ENCODE measurements at regions of chr9 and their contacts with region 1.

Region 1: GRCh38 chr9:124126571-124127289 is 115.2 kb downstream of the LHX2 start:
- DNase-seq: peak; percentile 84
- H3K4me3 ChIP-seq: peak overlapping the region in 1 of 2 experiments; percentile 2; a peak in 1 of 4 replicates
- H3K27ac ChIP-seq: no peak overlapping the region
- H3K4me1 ChIP-seq: no peaks in the 10 kb centered on the region
- H3K27me3 ChIP-seq: no peaks in the 10 kb centered on the region; the same call in 1 of the 2 replicates
- CTCF ChIP-seq: peak; percentile 95
- EP300 ChIP-seq: no peak
- RAD21 ChIP-seq: peak; percentile 83

Region 2: GRCh38 chr9:124110307-124110915 is 16.3 kb before region 1 on chr9:
- CTCF ChIA-PET with region 1: interaction called, 19 read pairs
- POLR2A ChIA-PET with region 1: no interaction called
- DNase-seq: no peak
- H3K4me3 ChIP-seq: no peak overlapping the region
- H3K27ac ChIP-seq: no peak overlapping the region
- H3K4me1 ChIP-seq: no peaks in the 10 kb centered on the region
- H3K27me3 ChIP-seq: no peaks in the 10 kb centered on the region; the same call in 1 of the 2 replicates
- CTCF ChIP-seq: no peak
- EP300 ChIP-seq: no peak
- RAD21 ChIP-seq: no peak

Region 3: GRCh38 chr9:124149992-124150391 is 23.3 kb after region 1 on chr9:
- CTCF ChIA-PET with region 1: interaction called, 10 read pairs
- POLR2A ChIA-PET with region 1: no interaction called
- DNase-seq: no peak
- H3K4me3 ChIP-seq: no peak overlapping the region
- H3K27ac ChIP-seq: no peak overlapping the region
- H3K4me1 ChIP-seq: no peaks in the 10 kb centered on the region
- H3K27me3 ChIP-seq: no peaks in the 10 kb centered on the region; the same call in 1 of the 2 replicates
- CTCF ChIP-seq: no peak
- EP300 ChIP-seq: no peak
- RAD21 ChIP-seq: no peak

Region 4: GRCh38 chr9:124320062-124320973 is 193.6 kb after region 1 on chr9:
- CTCF ChIA-PET with region 1: interaction called, 55 read pairs
- POLR2A ChIA-PET with region 1: no interaction called
- DNase-seq: peak; percentile 92
- H3K4me3 ChIP-seq: no peak overlapping the region; a peak in 2 of 4 replicates
- H3K27ac ChIP-seq: no peak overlapping the region
- H3K4me1 ChIP-seq: no peaks in the 10 kb centered on the region; a peak in 1 of 4 replicates
- H3K27me3 ChIP-seq: no peaks in the 10 kb centered on the region
- CTCF ChIP-seq: peak; percentile 83
- EP300 ChIP-seq: no peak
- RAD21 ChIP-seq: peak; percentile 78

Region 5: DNA sequence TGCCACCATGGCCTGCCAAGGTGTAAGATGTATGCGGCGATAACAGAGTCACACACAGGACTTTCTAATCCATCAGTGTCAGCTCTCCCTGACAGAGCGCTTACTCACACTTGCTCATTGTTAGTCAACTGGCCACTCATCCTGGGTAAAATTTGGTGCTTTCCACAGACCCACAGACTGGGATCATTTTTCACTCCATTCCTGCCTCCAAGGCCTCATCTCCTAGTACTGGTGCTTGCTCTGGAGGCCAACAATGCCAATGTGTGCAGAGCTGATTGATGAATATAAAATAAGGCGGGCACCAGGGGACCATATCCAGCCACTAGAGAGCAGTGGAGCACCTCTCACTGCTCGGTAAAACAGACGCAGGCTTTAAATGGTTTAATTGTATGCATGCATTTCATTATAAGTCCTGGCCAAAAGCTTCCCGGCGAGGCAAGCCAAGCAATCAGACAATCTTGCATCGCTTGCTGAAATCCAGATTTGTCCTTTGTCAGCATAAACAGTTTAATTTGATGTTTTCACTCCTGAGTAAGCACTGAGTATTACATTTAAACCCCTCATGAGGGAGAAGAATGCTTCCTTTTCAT is 266.2 kb after region 1 on chr9:
- CTCF ChIA-PET with region 1: interaction called, 64 read pairs
- POLR2A ChIA-PET with region 1: no interaction called
- DNase-seq: peak; percentile 77
- H3K4me3 ChIP-seq: peak overlapping the region in 1 of 2 experiments; percentile 28; a peak in 2 of 4 replicates
- H3K27ac ChIP-seq: peak overlapping the region; percentile 76 to 90
- H3K4me1 ChIP-seq: peaks cover 42 to 51% of the 10 kb centered on the region in 2 experiments
- H3K27me3 ChIP-seq: no peaks in the 10 kb centered on the region
- CTCF ChIP-seq: peak; percentile 69
- EP300 ChIP-seq: peak; percentile 41 to 96
- RAD21 ChIP-seq: peak; percentile 72

Measured in SK-N-SH (cell line).